Lower leg skin (tissue), 4 donors: ENCODE measurements at regions of chrX and their contacts with region 1.

Region 1: GRCh38 chrX:23012162-23012561 is 12.4 kb downstream of the DDX53 start:
- DNase-seq: no peak
- H3K4me3 ChIP-seq: no peak overlapping the region
- CTCF ChIP-seq: no peak
- POLR2A ChIP-seq: no peak

Region 2: DNA sequence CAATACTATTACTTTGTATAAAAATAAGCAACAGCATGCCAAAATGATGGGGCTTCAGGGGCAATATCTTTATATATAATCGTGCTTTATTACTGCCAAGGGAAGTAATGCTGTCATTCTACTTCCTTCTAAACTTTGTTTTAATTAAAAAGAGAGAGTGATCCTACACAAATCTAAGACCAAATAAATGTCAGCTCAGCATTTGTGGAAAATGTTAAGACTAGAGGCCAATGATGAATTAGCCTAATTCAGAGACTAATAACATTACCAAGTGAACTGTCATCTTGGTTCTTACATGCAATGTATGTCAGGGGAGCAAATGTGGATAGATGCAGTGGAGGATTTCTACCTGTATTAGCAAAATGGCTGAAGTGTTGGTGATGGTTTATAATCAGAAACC is 156.1 kb after region 1 on chrX:
- intact Hi-C with region 1: no loop called
- DNase-seq: no peak
- H3K4me3 ChIP-seq: no peak overlapping the region
- CTCF ChIP-seq: no peak
- POLR2A ChIP-seq: no peak

Region 3: DNA sequence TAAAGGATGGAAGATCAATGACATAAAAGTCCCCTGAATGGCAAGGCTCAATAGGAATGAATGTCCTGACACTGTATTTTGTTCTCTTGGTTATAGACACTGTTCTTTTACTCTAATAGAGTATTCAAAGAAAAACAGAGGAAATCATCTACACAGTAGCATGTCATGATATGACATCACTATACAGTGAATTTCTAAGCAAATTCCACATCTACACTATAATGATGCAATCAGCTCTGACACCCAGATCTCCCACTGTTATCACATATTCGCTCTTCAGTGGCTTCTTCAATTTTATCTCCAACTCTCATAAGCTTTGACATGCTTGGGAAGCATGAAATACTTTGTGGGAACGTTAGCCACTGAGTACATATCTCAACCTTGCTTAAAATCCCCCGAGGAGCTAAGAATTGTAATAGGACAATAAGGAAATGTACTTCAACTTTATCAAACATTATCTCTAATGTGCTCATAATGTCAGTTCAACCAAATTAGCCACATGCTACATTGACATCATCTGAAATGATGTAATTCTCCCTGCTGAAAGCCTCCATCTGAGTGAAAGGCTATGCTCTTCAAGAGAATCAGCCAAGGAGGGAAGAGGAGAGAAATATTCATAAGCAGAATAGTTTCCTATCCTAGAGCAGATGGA is 182.9 kb after region 1 on chrX:
- intact Hi-C with region 1: loop called (anchors 5 kb)
- DNase-seq: no peak
- H3K4me3 ChIP-seq: no peak overlapping the region
- CTCF ChIP-seq: no peak
- POLR2A ChIP-seq: no peak